H1 (cell line): ENCODE measurements at regions of chr1 and their contacts with region 1.

Region 1: DNA sequence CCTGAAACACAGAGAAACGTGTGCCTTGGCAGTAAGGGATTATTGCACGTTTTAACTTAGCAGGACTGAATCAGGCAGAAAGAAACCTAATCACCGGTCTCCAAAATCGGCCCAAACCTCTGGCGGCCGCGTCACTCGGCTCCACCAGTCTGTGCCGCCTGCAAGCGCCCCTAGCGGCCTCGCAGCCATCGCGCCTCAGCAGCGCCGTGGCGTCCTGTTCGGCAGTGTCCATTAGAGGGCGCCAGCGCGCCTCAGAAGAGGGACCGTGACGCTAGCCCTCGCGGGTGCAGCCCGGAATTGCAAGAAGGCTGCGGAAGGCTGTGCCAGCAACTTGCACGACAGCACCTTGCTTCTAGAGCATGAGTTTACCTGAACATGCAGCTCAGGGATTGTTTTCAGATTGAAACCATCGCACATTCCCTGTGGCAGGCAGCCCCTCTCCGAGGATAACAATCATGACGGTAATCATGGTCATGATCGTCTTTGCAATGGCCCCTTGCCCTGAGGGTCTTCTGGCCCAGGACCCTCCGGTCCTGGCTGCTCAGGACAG is 164.4 kb downstream of the TRIM33 start:
- DNase-seq: peak; percentile 92 to 100
- H3K4me3 ChIP-seq: peak overlapping the region; percentile 8 to 56 (median 25); a peak in 6 of 8 replicates
- H3K27ac ChIP-seq: no peak overlapping the region
- H3K4me1 ChIP-seq: peaks cover 0 to 10% (median 5%) of the 10 kb centered on the region in 4 experiments; a peak in 4 of 7 replicates
- H3K27me3 ChIP-seq: peaks cover 0 to 9% (median 3%) of the 10 kb centered on the region in 4 experiments; a peak in 2 of 7 replicates
- CTCF ChIP-seq: peak; percentile 100
- EP300 ChIP-seq: no peak
- POLR2A ChIP-seq: no peak
- RAD21 ChIP-seq: peak; percentile 99 to 100

Region 2: DNA sequence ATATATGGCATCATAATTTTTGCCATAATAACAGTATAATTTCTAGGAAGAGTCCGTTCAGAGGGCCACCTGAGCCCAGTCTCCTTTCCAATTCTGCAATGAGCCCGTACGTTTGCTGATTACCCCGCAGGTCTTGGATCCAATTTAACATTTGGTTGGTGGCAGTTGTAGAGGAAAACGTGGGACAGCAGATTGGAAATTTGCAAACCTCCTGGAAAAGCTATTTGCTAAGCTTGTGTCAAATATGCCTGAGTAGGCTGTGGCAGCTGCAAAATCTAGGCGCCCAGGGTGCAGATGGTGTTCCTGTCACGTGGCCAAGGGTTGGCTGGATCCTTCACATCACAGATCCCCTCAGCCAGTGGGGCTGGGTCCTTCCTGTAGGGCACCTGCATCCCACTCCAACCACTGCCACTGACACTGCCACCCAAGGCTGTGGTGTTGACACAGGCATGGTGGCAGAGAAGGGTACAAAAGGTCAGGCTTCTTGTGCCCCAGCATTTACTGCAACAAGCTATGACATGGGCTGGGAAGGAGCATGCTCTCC is 18.1 kb before region 1 on chr1:
- CTCF ChIA-PET with region 1: interaction called, 10 read pairs
- POLR2A ChIA-PET with region 1: no interaction called
- DNase-seq: no peak
- H3K4me3 ChIP-seq: no peak overlapping the region
- H3K27ac ChIP-seq: no peak overlapping the region
- H3K4me1 ChIP-seq: no peaks in the 10 kb centered on the region
- H3K27me3 ChIP-seq: peaks cover 0 to 2% (median 0%) of the 10 kb centered on the region in 4 experiments; a peak in 4 of 7 replicates
- CTCF ChIP-seq: no peak
- EP300 ChIP-seq: no peak
- POLR2A ChIP-seq: no peak
- RAD21 ChIP-seq: no peak

Region 3: GRCh38 chr1:114377336-114377735 is 30.8 kb after region 1 on chr1:
- CTCF ChIA-PET with region 1: interaction called, 11 read pairs
- POLR2A ChIA-PET with region 1: no interaction called
- DNase-seq: no peak
- H3K4me3 ChIP-seq: no peak overlapping the region
- H3K27ac ChIP-seq: no peak overlapping the region
- H3K4me1 ChIP-seq: no peaks in the 10 kb centered on the region; a peak in 1 of 7 replicates
- H3K27me3 ChIP-seq: peaks cover 0 to 1% (median 0%) of the 10 kb centered on the region in 4 experiments; a peak in 1 of 7 replicates
- CTCF ChIP-seq: no peak
- EP300 ChIP-seq: no peak
- POLR2A ChIP-seq: no peak
- RAD21 ChIP-seq: no peak

Region 4: GRCh38 chr1:114407898-114408555 is 61.5 kb after region 1 on chr1:
- CTCF ChIA-PET with region 1: interaction called, 11 read pairs
- POLR2A ChIA-PET with region 1: no interaction called
- DNase-seq: no peak
- H3K4me3 ChIP-seq: no peak overlapping the region
- H3K27ac ChIP-seq: no peak overlapping the region
- H3K4me1 ChIP-seq: no peaks in the 10 kb centered on the region
- H3K27me3 ChIP-seq: no peaks in the 10 kb centered on the region
- CTCF ChIP-seq: no peak
- EP300 ChIP-seq: no peak
- POLR2A ChIP-seq: no peak
- RAD21 ChIP-seq: no peak

Region 5: DNA sequence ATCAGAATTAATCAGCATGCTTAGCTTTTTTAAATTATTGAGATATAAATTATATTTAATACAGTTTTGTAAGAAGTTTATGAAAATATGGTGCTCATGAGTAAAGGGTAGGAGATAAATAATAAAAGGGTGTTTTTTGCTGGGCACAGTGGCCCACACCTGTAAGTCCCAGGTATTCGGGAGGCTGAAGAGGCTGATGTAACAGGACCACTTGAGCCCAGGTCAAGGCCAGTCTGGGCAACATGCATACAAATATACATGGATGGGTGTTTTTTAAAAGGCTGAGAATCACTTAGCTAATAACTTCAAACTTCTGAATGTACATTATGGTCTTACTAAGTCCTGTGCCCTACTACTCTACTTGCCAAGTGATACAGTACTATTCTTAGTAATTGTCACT is 91.3 kb after region 1 on chr1:
- CTCF ChIA-PET with region 1: no interaction called
- POLR2A ChIA-PET with region 1: no interaction called
- DNase-seq: no peak
- H3K4me3 ChIP-seq: no peak overlapping the region
- H3K27ac ChIP-seq: no peak overlapping the region
- H3K4me1 ChIP-seq: no peaks in the 10 kb centered on the region
- H3K27me3 ChIP-seq: no peaks in the 10 kb centered on the region
- CTCF ChIP-seq: no peak
- EP300 ChIP-seq: no peak
- POLR2A ChIP-seq: no peak
- RAD21 ChIP-seq: no peak

Region 6: DNA sequence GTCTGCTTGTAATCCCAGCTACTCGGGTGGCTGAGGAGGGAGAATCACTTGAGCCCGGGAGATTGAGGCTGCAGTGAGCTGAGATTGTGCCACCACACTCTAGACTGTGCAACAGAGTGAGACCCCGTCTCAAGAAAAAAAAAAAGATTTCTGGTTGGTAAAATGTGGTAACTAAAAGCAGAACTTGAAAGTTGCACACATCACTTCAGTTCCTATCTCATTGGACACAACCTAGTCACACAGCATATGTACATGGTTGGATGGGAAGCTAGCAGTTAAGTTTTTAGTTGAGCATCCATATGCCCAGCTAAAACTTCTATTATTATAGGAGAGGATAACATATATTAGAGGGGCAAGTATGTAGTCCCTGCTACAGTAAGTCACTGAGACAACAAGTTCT is 212.8 kb after region 1 on chr1:
- CTCF ChIA-PET with region 1: interaction called, 11 read pairs
- POLR2A ChIA-PET with region 1: no interaction called
- DNase-seq: no peak
- H3K4me3 ChIP-seq: no peak overlapping the region
- H3K27ac ChIP-seq: no peak overlapping the region
- H3K4me1 ChIP-seq: no peaks in the 10 kb centered on the region
- H3K27me3 ChIP-seq: no peaks in the 10 kb centered on the region
- CTCF ChIP-seq: no peak
- EP300 ChIP-seq: no peak
- POLR2A ChIP-seq: no peak
- RAD21 ChIP-seq: no peak

Region 7: DNA sequence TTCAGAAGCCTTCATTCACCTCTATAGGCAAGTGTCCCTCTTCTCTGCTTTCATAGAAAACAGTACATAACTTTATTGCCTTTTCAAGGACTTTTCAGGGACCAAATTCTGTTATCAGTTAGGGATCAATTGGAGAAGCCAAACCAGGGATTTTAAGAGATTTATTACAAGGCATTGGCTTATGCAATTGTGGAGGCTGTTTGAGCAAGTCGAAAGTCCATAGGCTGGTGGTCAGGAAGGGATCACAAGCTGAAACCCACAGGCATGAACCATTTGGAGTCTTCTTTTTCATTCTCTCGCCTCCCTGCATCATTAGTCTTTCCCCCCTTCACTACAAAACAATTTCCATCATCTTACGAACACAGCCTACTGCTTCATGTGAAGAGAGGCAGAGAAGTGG is 473.3 kb after region 1 on chr1:
- CTCF ChIA-PET with region 1: no interaction called
- POLR2A ChIA-PET with region 1: no interaction called
- DNase-seq: no peak
- H3K4me3 ChIP-seq: no peak overlapping the region
- H3K27ac ChIP-seq: no peak overlapping the region
- H3K4me1 ChIP-seq: no peaks in the 10 kb centered on the region
- H3K27me3 ChIP-seq: no peaks in the 10 kb centered on the region
- CTCF ChIP-seq: no peak
- EP300 ChIP-seq: no peak
- POLR2A ChIP-seq: no peak
- RAD21 ChIP-seq: no peak